ENCODE measurements at regions of chr6 and their contacts with region 1.

Region 1: GRCh38 chr6:10837995-10838793 is at the start of gene MAK:
- DNase-seq: peak; percentile 80 to 95
- H3K4me3 ChIP-seq: peak within 1 kb of the TSS; percentile 84
- H3K27ac ChIP-seq: peak within 1 kb of the TSS; percentile 53
- H3K4me1 ChIP-seq: peaks cover 12% of the 10 kb centered on the region; the same call in 1 of the 2 replicates
- H3K27me3 ChIP-seq: no peaks in the 10 kb centered on the region
- CTCF ChIP-seq: no peak
- total RNA-seq, gene MAK: 0.85 and 1.6 TPM in 2 replicates

Region 2: GRCh38 chr6:10800829-10801535 is 37.2 kb before region 1 on chr6:
- CTCF ChIA-PET with region 1: no interaction called
- POLR2A ChIA-PET with region 1: no interaction called
- intact Hi-C with region 1: no loop called
- DNase-seq: peak; percentile 66 to 70
- H3K4me3 ChIP-seq: no peak overlapping the region
- H3K27ac ChIP-seq: peak overlapping the region; percentile 41; the same call in 1 of the 2 replicates
- H3K4me1 ChIP-seq: peaks cover 8% of the 10 kb centered on the region
- H3K27me3 ChIP-seq: no peaks in the 10 kb centered on the region
- CTCF ChIP-seq: peak; percentile 94

Region 3: DNA sequence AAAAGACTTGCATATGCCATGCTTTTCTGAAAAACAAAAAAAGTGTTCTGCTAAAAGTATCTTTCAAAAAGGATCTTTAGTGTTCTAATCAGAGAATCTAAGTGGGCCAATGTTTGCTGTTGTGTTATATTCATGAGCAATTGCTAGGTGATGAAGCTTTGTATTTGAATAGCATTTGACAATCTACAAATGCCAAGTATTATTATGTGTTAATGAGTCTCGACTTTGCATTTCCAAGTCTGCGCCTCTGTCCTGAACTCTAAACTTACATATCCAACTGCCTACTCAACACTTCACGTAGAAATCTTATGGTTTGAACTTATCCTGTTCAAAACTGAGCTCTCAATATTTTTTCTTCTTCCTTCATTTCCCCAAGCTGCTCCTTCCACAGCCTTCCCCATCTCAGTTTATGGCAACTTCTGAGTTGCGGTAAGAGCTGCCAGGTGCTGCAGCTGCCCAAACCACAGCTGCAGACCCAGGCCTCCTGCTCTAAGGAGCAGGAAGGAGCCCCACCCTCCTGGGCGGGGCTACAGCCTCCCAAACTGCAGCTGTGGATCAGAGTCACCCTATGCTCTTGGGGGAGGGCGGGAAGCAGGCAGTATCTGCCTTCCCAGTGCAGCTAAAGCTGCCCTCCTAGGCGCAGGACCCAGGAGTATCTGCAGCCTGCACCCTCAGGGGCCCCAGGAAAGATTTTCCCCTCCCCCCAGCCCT is 16.9 kb after region 1 on chr6:
- CTCF ChIA-PET with region 1: interaction called, 4 read pairs
- POLR2A ChIA-PET with region 1: interaction called, 10 read pairs
- intact Hi-C with region 1: no loop called
- DNase-seq: no peak
- H3K4me3 ChIP-seq: no peak overlapping the region
- H3K27ac ChIP-seq: no peak overlapping the region
- H3K4me1 ChIP-seq: no peaks in the 10 kb centered on the region
- H3K27me3 ChIP-seq: no peaks in the 10 kb centered on the region
- CTCF ChIP-seq: no peak

Region 4: DNA sequence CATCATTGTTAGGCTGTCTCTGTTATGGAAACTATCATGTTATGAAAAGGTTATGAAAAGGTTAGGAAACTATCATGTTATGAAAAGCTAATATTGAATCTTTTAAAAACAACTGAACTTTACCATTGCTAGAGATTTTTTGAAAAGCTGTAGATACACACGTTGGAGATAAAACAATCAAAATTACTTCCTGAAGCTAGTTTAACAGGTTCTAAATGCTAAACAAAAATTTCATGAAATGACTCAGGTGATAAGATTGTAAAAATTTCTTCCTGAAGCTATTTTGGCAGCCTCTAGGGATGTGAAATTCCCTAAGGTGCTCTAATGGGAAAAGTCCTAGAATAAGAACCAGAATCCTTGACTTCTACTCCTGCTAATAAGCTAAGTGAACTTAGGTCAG is 35.1 kb after region 1 on chr6:
- CTCF ChIA-PET with region 1: no interaction called
- POLR2A ChIA-PET with region 1: interaction called, 10 read pairs
- intact Hi-C with region 1: no loop called
- DNase-seq: peak in 1 of 2 experiments; percentile 88
- H3K4me3 ChIP-seq: peak overlapping the region; percentile 42; the same call in 1 of the 2 replicates
- H3K27ac ChIP-seq: peak overlapping the region; percentile 88
- H3K4me1 ChIP-seq: peaks cover 34% of the 10 kb centered on the region
- H3K27me3 ChIP-seq: no peaks in the 10 kb centered on the region
- CTCF ChIP-seq: no peak

Region 5: GRCh38 chr6:10886691-10887535 is 48.7 kb after region 1 on chr6 and contains the start of gene SYCP2L:
- CTCF ChIA-PET with region 1: interaction called, 6 read pairs
- POLR2A ChIA-PET with region 1: interaction called, 6 read pairs
- intact Hi-C with region 1: loop called (anchors 1 kb)
- DNase-seq: peak; percentile 80 to 90
- H3K4me3 ChIP-seq: peak within 1 kb of the TSS; percentile 81
- H3K27ac ChIP-seq: peak within 1 kb of the TSS; percentile 81
- H3K4me1 ChIP-seq: peaks cover 11% of the 10 kb centered on the region; the same call in 1 of the 2 replicates
- H3K27me3 ChIP-seq: no peaks in the 10 kb centered on the region
- CTCF ChIP-seq: peak; percentile 41; the same call in 1 of the 2 replicates
- total RNA-seq, gene SYCP2L: 12.6 and 15.7 TPM in 2 replicates

Region 6: GRCh38 chr6:11067348-11067747 is 229.2 kb after region 1 on chr6:
- CTCF ChIA-PET with region 1: no interaction called
- POLR2A ChIA-PET with region 1: no interaction called
- intact Hi-C with region 1: no loop called
- DNase-seq: peak in 1 of 2 experiments; percentile 19
- H3K4me3 ChIP-seq: no peak overlapping the region
- H3K27ac ChIP-seq: no peak overlapping the region
- H3K4me1 ChIP-seq: no peaks in the 10 kb centered on the region
- H3K27me3 ChIP-seq: no peaks in the 10 kb centered on the region
- CTCF ChIP-seq: no peak

Measured in PC-9 (cell line).